ENCODE measurements at regions of chr6 and their contacts with region 1.

Region 1: GRCh38 chr6:143745166-143746133 is 67.7 kb downstream of the PHACTR2 start:
- DNase-seq: no peak
- H3K4me3 ChIP-seq: peak overlapping the region; percentile 39
- H3K27ac ChIP-seq: peak overlapping the region; percentile 77
- H3K4me1 ChIP-seq: peaks cover 71% of the 10 kb centered on the region
- H3K27me3 ChIP-seq: no peaks in the 10 kb centered on the region
- CTCF ChIP-seq: no peak

Region 2: GRCh38 chr6:143657809-143658208 is 87.6 kb before region 1 on chr6:
- intact Hi-C with region 1: no loop called
- DNase-seq: no peak
- H3K4me3 ChIP-seq: no peak overlapping the region
- H3K27ac ChIP-seq: no peak overlapping the region
- H3K4me1 ChIP-seq: peaks cover 6% of the 10 kb centered on the region
- H3K27me3 ChIP-seq: no peaks in the 10 kb centered on the region
- CTCF ChIP-seq: no peak

Region 3: GRCh38 chr6:143695130-143695968 is 50.1 kb before region 1 on chr6:
- intact Hi-C with region 1: loop called (anchors 10 kb)
- DNase-seq: no peak
- H3K4me3 ChIP-seq: peak overlapping the region; percentile 15
- H3K27ac ChIP-seq: peak overlapping the region; percentile 64
- H3K4me1 ChIP-seq: peaks cover 96% of the 10 kb centered on the region
- H3K27me3 ChIP-seq: no peaks in the 10 kb centered on the region
- CTCF ChIP-seq: no peak